MCF 10A (cell line): ENCODE measurements at regions of chr13 and their contacts with region 1.

Region 1: DNA sequence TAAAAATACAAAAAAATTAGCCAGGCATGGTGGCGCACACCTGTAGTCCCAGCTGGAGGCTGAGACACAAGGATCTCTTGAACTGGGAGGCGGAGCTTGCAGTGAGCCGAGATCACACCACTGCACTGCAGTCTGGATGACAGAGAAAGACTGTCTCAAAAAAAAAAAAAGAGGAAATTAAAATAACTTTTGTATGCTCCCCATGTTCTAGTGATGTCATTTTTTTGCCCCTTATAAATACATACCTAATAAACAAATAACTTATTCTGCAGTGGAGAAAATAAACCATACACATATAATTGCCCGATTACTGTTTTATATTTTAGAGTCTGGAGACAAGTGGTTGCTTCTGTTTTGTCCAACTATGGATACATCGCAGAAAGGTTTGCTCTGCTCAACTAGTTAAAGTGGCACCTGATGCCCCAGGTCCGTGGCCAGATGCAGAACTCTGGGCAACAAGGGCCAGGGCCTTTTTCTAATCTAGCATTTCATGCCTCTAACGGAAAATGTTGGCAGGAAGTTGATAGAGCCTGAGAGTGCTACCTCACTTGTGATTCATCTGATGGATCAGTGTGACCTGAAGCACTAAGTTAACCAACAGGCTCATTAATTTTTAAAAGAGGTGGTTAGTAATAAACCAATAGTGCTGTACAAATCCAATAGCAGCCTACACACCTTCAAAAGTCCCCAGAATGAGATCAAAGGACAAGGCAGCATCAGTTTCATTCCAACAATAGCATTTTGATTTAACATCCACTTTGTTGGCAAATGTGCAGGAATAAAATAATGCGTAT is 18.8 kb downstream of the UBE2L5 start:
- DNase-seq: no peak
- H3K4me3 Mint-ChIP-seq: no peak overlapping the region
- H3K27ac Mint-ChIP-seq: no peak overlapping the region
- H3K4me1 Mint-ChIP-seq: no peaks in the 10 kb centered on the region
- H3K27me3 Mint-ChIP-seq: no peaks in the 10 kb centered on the region
- CTCF ChIP-seq: no peak

Region 2: GRCh38 chr13:30429721-30430694 is 11.1 kb before region 1 on chr13:
- CTCF ChIA-PET with region 1: interaction called, 10 read pairs
- POLR2A ChIA-PET with region 1: interaction called, 6 read pairs
- intact Hi-C with region 1: no loop called
- DNase-seq: peak; percentile 89
- H3K4me3 Mint-ChIP-seq: peak overlapping the region; percentile 32
- H3K27ac Mint-ChIP-seq: peak overlapping the region; percentile 57
- H3K4me1 Mint-ChIP-seq: peaks cover 13% of the 10 kb centered on the region
- H3K27me3 Mint-ChIP-seq: no peaks in the 10 kb centered on the region
- CTCF ChIP-seq: no peak